ENCODE measurements at regions of chr14 and their contacts with region 1.

Region 1: DNA sequence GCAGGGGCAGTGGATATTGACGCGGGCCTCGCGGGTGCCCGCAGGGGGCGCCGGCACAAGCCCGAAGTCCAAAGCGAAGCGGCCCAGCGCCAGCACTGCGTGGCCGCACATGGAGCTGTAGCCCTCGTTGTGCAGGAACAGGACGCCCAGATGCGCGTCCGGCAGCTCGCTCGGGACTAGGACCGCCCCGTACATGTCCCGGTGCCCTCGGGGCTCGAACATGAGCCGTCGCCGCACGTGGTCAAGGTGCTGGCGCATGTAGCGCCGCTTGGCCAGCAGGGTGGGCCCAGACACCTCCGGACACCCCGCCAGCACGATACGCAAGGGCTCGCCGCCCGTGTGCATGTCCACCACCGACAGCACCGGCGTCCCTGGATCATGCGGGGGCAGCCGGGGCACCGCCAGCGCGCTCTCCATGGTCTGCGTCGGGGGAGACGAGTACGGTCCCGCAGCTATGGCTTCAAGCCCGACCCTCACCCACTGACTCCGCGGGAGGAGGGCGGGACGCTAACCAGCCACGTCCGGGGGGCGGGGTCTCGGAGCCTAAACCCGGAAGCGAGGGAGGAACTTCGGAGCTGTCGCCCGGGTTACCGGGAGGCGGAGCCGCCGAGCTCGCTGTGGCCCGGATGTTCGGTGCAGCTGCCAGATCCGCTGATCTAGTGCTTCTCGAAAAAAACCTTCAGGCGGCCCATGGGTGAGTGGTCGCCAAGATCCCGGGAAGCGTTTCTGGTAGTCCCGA is at the starts of genes JKAMP and L3HYPDH:
- DNase-seq: peak; percentile 89 to 96
- H3K4me3 ChIP-seq: peak within 1 kb of the TSS; percentile 99
- H3K27ac ChIP-seq: peak within 1 kb of the TSS; percentile 96
- H3K4me1 ChIP-seq: peaks cover 46% of the 10 kb centered on the region
- H3K27me3 ChIP-seq: no peaks in the 10 kb centered on the region
- CTCF ChIP-seq: peak; percentile 50
- total RNA-seq, gene JKAMP: 54.6 and 60.1 TPM in 2 replicates
- total RNA-seq, gene L3HYPDH: 96.3 and 121 TPM in 2 replicates

Region 2: DNA sequence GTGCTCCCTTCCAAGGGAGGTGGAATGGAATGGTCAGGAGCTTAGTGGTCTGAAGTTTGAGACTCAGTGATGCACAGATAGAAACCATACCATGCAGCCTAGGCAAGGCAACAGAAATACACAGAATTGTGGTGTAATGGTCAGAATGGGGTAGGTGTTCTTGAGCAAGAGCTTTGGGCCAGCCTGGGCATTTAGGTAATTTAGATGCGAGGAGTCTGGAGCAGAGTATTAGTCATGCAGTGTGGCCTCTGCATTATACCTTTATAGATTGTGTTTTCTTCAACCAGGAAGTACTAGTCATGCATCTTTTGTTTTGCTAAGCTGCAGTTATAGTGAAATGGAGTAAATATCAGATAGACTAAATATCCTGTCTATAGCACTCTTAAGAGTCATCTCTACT is 177.3 kb before region 1 on chr14:
- CTCF ChIA-PET with region 1: no interaction called
- POLR2A ChIA-PET with region 1: no interaction called
- intact Hi-C with region 1: no loop called
- DNase-seq: peak; percentile 23 to 86
- H3K4me3 ChIP-seq: no peak overlapping the region
- H3K27ac ChIP-seq: peak overlapping the region; percentile 64
- H3K4me1 ChIP-seq: peaks cover 35% of the 10 kb centered on the region
- H3K27me3 ChIP-seq: no peaks in the 10 kb centered on the region
- CTCF ChIP-seq: no peak

Region 3: GRCh38 chr14:59360923-59361794 is 122.9 kb before region 1 on chr14:
- CTCF ChIA-PET with region 1: no interaction called
- POLR2A ChIA-PET with region 1: no interaction called
- intact Hi-C with region 1: loop called (anchors 2 kb)
- DNase-seq: peak; percentile 88 to 99
- H3K4me3 ChIP-seq: peak overlapping the region; percentile 33; the same call in 1 of the 2 replicates
- H3K27ac ChIP-seq: peak overlapping the region; percentile 86
- H3K4me1 ChIP-seq: peaks cover 100% of the 10 kb centered on the region
- H3K27me3 ChIP-seq: no peaks in the 10 kb centered on the region
- CTCF ChIP-seq: no peak

Region 4: DNA sequence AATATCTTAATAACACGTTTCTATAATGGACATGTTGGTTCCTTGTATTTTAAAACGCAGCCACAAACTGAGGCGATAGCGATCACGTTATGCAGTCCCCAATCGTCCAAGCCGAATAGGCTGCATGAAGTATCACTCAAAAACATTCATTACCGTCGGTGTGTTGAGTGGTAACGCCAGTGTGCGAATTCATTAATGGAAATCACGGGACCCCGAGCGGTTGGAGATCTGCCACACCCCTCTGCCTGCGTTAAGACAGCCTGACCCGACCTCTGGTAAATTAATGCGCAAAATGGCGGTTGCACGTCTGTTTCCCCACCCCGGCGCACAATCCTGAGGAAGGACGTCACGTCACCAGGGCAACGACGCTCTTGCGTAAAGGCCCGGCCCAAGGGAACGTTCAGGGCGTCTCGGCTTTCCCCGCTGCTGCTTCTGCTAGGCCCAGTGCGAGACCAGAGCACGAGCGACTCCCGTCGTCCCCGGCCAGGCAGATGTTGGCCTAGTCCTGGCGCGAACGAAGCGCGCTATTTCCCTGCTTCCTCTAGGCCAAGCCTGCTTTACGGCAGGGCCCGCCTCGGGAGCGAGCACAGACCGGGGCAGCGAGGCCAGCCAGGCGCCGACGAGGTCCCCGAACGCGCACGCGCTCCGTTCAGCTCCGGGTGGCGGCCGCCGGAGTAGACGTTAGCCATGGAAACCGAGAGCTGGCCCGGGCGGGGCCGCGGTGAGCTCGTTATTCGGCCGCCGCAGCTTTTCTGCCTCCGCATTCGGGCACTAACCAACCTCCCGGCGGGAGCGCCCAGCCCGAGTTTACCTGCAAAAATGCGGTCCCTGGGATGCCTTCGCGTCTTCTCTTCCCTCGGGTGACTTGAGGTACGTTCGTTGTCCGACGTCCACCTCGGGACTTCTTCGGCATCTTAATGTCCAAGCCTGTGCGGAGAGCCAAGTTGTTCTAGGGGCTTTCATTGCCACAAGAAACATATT is 607.8 kb after region 1 on chr14 and contains the start of gene PCNX4:
- CTCF ChIA-PET with region 1: no interaction called
- POLR2A ChIA-PET with region 1: no interaction called
- intact Hi-C with region 1: loop called (anchors 5 kb)
- DNase-seq: peak; percentile 96
- H3K4me3 ChIP-seq: peak within 1 kb of the TSS; percentile 90
- H3K27ac ChIP-seq: peak within 1 kb of the TSS; percentile 94
- H3K4me1 ChIP-seq: peaks cover 20% of the 10 kb centered on the region
- H3K27me3 ChIP-seq: no peaks in the 10 kb centered on the region
- CTCF ChIP-seq: no peak
- total RNA-seq, gene PCNX4: 58.3 and 65.1 TPM in 2 replicates

Measured in PC-9 (cell line).